Caco-2 (cell line): ENCODE measurements at regions of chr6 and their contacts with region 1.

Region 1: DNA sequence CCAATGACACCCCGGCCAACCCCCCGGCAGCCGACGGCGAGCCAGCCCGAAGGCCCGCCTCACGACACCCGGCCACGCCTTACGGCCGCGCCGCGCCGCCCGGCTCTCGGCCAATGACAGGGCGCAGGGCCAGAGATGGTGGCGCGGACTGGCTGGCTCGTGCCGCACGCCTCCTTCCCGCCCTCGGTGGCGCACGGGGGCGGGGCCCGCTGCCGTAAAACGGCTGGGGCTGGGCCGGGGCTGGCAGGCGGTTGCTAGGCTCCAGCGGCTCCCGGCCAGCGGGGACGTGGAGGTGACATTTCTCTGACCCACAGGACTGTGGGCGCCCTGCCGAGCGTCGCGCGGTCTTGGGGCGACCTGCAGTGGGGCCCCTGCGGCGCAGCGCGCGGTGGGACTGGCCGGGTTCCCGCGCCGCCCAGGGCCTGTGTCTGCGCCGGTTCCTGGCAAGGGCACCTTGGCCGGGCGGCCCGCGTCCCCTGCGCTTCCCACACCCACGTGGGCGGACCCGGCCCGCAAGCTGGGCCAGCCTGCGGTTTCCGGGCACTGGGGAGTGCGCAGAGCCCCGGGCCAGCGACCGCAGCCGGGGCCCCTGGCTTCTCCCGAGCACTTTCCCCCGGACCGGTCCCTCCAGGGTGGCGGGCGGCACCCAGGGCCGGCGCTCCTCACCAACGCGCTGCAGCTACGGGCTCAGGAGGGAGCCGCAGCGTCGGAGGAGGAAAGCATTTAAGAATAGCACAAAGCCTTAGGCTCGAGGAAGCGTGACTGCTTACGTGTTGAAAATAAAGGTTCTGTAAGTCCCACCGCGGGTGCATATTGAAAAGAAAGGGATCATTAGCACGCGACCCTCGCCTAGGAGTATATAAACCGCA is at the start of gene MPC1:
- DNase-seq: peak; percentile 94 to 98
- H3K4me3 ChIP-seq: peak within 1 kb of the TSS; percentile 86
- H3K4me3 Mint-ChIP-seq: peak within 1 kb of the TSS; percentile 82
- H3K27ac Mint-ChIP-seq: peak within 1 kb of the TSS; percentile 87
- H3K4me1 ChIP-seq: peaks cover 21% of the 10 kb centered on the region
- H3K4me1 Mint-ChIP-seq: peaks cover 13% of the 10 kb centered on the region
- H3K27me3 ChIP-seq: no peaks in the 10 kb centered on the region
- H3K27me3 Mint-ChIP-seq: no peaks in the 10 kb centered on the region
- CTCF ChIP-seq: no peak
- total RNA-seq, gene MPC1: 19.7 and 20.4 TPM in 2 replicates

Region 2: GRCh38 chr6:166308033-166308768 is 75.0 kb before region 1 on chr6 and contains the start of gene PRR18:
- CTCF ChIA-PET with region 1: no interaction called
- POLR2A ChIA-PET with region 1: no interaction called
- intact Hi-C with region 1: loop called (anchors 1 kb)
- DNase-seq: peak in 1 of 2 experiments; percentile 48
- H3K4me3 ChIP-seq: peak within 1 kb of the TSS; percentile 62
- H3K4me3 Mint-ChIP-seq: peak within 1 kb of the TSS; percentile 52
- H3K27ac Mint-ChIP-seq: no peak within 1 kb of the TSS
- H3K4me1 ChIP-seq: 0 out of 2 replicates have a peak, but pooled peaks cover 3% of the 10 kb centered on the region
- H3K4me1 Mint-ChIP-seq: no peaks in the 10 kb centered on the region
- H3K27me3 ChIP-seq: no peaks in the 10 kb centered on the region
- H3K27me3 Mint-ChIP-seq: no peaks in the 10 kb centered on the region
- CTCF ChIP-seq: no peak
- total RNA-seq, gene PRR18: 0.77 and 0.95 TPM in 2 replicates

Region 3: GRCh38 chr6:166342349-166343149 is 40.6 kb before region 1 on chr6 and contains the start of gene SFT2D1:
- CTCF ChIA-PET with region 1: interaction called, 3 read pairs
- POLR2A ChIA-PET with region 1: no interaction called
- intact Hi-C with region 1: loop called (anchors 1 kb)
- DNase-seq: peak; percentile 76 to 82
- H3K4me3 ChIP-seq: peak within 1 kb of the TSS; percentile 99
- H3K4me3 Mint-ChIP-seq: peak within 1 kb of the TSS; percentile 88
- H3K27ac Mint-ChIP-seq: peak within 1 kb of the TSS; percentile 83
- H3K4me1 ChIP-seq: peaks cover 17% of the 10 kb centered on the region
- H3K4me1 Mint-ChIP-seq: peaks cover 6% of the 10 kb centered on the region
- H3K27me3 ChIP-seq: no peaks in the 10 kb centered on the region
- H3K27me3 Mint-ChIP-seq: no peaks in the 10 kb centered on the region
- CTCF ChIP-seq: peak in 1 of 2 experiments; percentile 3
- total RNA-seq, gene SFT2D1: 44.3 and 48.1 TPM in 2 replicates

Region 4: GRCh38 chr6:166400181-166400580 is 17.0 kb after region 1 on chr6:
- CTCF ChIA-PET with region 1: interaction called, 9 read pairs
- POLR2A ChIA-PET with region 1: interaction called, 4 read pairs
- intact Hi-C with region 1: loop called (anchors 1 kb)
- DNase-seq: no peak
- H3K4me3 ChIP-seq: no peak overlapping the region
- H3K4me3 Mint-ChIP-seq: no peak overlapping the region
- H3K27ac Mint-ChIP-seq: no peak overlapping the region
- H3K4me1 ChIP-seq: no peaks in the 10 kb centered on the region
- H3K4me1 Mint-ChIP-seq: peaks cover 5% of the 10 kb centered on the region
- H3K27me3 ChIP-seq: no peaks in the 10 kb centered on the region
- H3K27me3 Mint-ChIP-seq: no peaks in the 10 kb centered on the region
- CTCF ChIP-seq: no peak

Region 5: DNA sequence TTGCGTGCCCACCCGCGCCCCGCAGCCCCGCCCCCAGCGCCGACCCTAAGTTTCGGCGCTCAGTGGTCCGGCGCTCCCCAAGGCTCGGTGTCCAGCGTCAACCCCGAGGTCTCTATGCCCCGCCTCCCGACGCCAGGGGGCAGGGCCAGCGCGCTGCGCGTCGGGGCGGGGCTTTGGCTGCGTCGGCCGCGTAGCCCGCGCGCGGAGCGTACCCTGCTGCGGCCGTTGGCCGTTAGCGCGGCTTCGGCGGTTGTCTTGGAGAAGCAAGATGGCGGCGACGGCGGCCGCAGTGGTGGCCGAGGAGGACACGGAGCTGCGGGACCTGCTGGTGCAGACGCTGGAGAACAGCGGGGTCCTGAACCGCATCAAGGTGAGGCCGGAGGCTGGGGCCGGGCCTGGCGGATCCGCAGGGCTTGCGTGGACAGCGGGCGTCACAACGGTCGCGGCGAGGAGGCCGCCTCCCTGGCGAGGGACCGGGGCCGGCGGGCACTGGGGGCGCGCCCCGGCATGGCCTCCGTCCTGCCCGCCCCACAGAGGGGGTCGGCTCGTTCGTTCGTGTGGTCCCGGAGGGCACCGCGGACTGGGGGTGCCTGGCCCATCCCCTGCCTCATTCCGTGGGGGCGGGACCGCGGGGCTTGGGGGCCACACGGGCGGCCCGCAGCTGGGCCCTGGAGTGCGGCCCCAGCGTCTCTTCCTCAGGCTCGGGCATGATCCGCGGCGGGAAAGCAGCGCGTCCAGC is 616.1 kb after region 1 on chr6 and contains the start of gene CEP43:
- CTCF ChIA-PET with region 1: no interaction called
- POLR2A ChIA-PET with region 1: no interaction called
- intact Hi-C with region 1: loop called (anchors 10 kb)
- DNase-seq: peak; percentile 92 to 95
- H3K4me3 ChIP-seq: peak within 1 kb of the TSS; percentile 67
- H3K4me3 Mint-ChIP-seq: peak within 1 kb of the TSS; percentile 84
- H3K27ac Mint-ChIP-seq: peak within 1 kb of the TSS; percentile 82
- H3K4me1 ChIP-seq: peaks cover 3% of the 10 kb centered on the region; the same call in 1 of the 2 replicates
- H3K4me1 Mint-ChIP-seq: peaks cover 14% of the 10 kb centered on the region
- H3K27me3 ChIP-seq: no peaks in the 10 kb centered on the region
- H3K27me3 Mint-ChIP-seq: no peaks in the 10 kb centered on the region
- CTCF ChIP-seq: no peak
- total RNA-seq, gene CEP43: 36.3 and 37.0 TPM in 2 replicates